Mammary epithelial cell (primary cell): ENCODE measurements at regions of chr2 and their contacts with region 1.

Region 1: DNA sequence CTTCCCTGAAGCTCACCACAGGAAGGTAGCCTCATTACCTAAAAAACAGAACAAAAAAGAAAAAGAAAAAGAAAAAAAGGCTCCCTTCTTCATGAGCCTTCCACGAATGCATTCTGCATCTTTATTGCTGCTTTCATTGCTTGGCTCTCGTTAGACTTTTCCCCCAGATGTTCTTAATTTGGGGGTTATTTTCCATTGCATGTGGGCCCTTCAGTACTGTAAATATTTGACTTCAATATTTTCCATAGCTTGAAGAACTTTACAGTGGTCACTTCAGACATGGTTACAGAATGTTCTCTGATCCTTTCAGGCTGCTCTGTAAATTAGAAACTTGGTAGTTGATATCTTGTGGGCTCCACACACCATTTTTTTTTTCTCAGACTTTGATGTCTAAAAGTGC is 65.6 kb upstream of the COPS8 start:
- DNase-seq: no peak
- H3K4me3 ChIP-seq: no peak overlapping the region
- H3K27ac ChIP-seq: no peak overlapping the region
- H3K4me1 ChIP-seq: peaks cover 4% of the 10 kb centered on the region
- H3K27me3 ChIP-seq: no peaks in the 10 kb centered on the region
- CTCF ChIP-seq: no peak

Region 2: DNA sequence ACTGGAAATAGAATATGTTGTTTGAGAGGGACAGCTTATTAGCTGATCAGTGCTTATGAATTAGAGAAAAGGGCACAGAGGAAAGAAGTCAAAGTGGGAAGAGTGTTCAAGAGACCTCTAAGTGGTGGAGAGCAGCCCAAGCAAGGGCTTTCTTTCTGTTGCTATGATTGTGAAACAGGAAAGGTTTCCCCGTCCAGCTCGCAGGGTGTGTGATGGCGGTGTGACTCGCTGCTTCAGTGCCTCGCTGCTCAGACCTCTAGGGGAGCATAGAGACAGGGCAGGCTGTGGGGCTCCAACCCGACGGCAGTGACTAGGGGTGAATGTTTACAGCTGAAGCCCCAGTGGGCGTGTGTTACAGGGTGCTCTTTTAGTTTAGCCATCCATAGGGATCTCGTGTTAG is 100.9 kb before region 1 on chr2:
- CTCF ChIA-PET with region 1: no interaction called
- dilution Hi-C with region 1: no loop called
- in situ Hi-C with region 1: no loop called
- intact Hi-C with region 1: no loop called
- DNase-seq: peak; percentile 7
- H3K4me3 ChIP-seq: no peak overlapping the region
- H3K27ac ChIP-seq: no peak overlapping the region
- H3K4me1 ChIP-seq: no peaks in the 10 kb centered on the region
- H3K27me3 ChIP-seq: no peaks in the 10 kb centered on the region
- CTCF ChIP-seq: no peak

Region 3: DNA sequence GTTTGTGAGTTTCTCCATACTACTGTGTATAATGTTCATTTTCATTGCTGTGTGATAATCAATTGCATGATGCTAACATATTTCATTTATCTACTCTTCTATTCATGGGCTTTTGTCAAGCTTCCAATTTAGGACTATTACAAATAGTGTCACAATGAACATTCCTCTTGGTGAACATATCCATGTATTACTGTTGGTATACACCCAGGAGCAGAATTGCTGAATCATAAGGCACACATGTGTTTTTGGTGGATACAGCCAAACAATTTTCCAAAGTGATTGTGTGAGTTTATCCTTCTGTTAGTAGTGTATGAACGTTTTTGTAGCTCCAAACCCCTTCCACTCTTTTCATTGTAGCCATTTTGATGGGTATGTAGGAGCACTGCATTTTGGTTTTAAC is 36.0 kb before region 1 on chr2:
- CTCF ChIA-PET with region 1: interaction called, 3 read pairs
- dilution Hi-C with region 1: loop called (anchors 5 kb)
- in situ Hi-C with region 1: no loop called
- intact Hi-C with region 1: no loop called
- DNase-seq: no peak
- H3K4me3 ChIP-seq: no peak overlapping the region
- H3K27ac ChIP-seq: no peak overlapping the region
- H3K4me1 ChIP-seq: no peaks in the 10 kb centered on the region
- H3K27me3 ChIP-seq: no peaks in the 10 kb centered on the region
- CTCF ChIP-seq: no peak

Region 4: GRCh38 chr2:237072067-237072931 is 52.2 kb after region 1 on chr2:
- CTCF ChIA-PET with region 1: no interaction called
- dilution Hi-C with region 1: loop called (anchors 5 kb)
- in situ Hi-C with region 1: no loop called
- intact Hi-C with region 1: no loop called
- DNase-seq: peak; percentile 31
- H3K4me3 ChIP-seq: no peak overlapping the region
- H3K27ac ChIP-seq: no peak overlapping the region
- H3K4me1 ChIP-seq: no peaks in the 10 kb centered on the region
- H3K27me3 ChIP-seq: no peaks in the 10 kb centered on the region
- CTCF ChIP-seq: peak; percentile 94 to 99

Region 5: GRCh38 chr2:237113026-237113795 is 93.1 kb after region 1 on chr2:
- CTCF ChIA-PET with region 1: no interaction called
- dilution Hi-C with region 1: no loop called
- in situ Hi-C with region 1: no loop called
- intact Hi-C with region 1: no loop called
- DNase-seq: no peak
- H3K4me3 ChIP-seq: no peak overlapping the region
- H3K27ac ChIP-seq: no peak overlapping the region
- H3K4me1 ChIP-seq: peaks cover 28% of the 10 kb centered on the region
- H3K27me3 ChIP-seq: no peaks in the 10 kb centered on the region
- CTCF ChIP-seq: no peak